CD4-positive, alpha-beta T cell (primary cell): ENCODE measurements at regions of chr2 and their contacts with region 1.

Region 1: GRCh38 chr2:130342533-130343275 is at the start of gene IMP4:
- DNase-seq: peak; percentile 89 to 99 (median 93)
- ATAC-seq: peak; percentile 87
- H3K4me3 ChIP-seq: peak within 1 kb of the TSS; percentile 68
- H3K4me3 Mint-ChIP-seq: peak within 1 kb of the TSS; percentile 93
- H3K27ac ChIP-seq: peak within 1 kb of the TSS; percentile 96 to 97
- H3K27ac Mint-ChIP-seq: peak within 1 kb of the TSS; percentile 99
- H3K4me1 ChIP-seq: peaks cover 34% of the 10 kb centered on the region
- H3K4me1 Mint-ChIP-seq: peaks cover 46% of the 10 kb centered on the region
- H3K27me3 ChIP-seq: no peaks in the 10 kb centered on the region
- H3K27me3 Mint-ChIP-seq: no peaks in the 10 kb centered on the region
- CTCF ChIP-seq: peak; percentile 46
- total RNA-seq, gene IMP4: 81.7 to 88.1 TPM

Region 2: GRCh38 chr2:129877289-129877779 is 465.4 kb before region 1 on chr2:
- CTCF ChIA-PET with region 1: interaction called, 3 read pairs
- POLR2A ChIA-PET with region 1: interaction called, 15 read pairs
- intact Hi-C with region 1: loop called in 1 of 2 experiments (anchors 5 kb)
- DNase-seq: peak; percentile 72 to 93 (median 82)
- ATAC-seq: peak; percentile 90
- H3K4me3 ChIP-seq: peak overlapping the region; percentile 81
- H3K4me3 Mint-ChIP-seq: peak overlapping the region; percentile 99
- H3K27ac ChIP-seq: peak overlapping the region in 1 of 2 donors; percentile 50
- H3K27ac Mint-ChIP-seq: peak overlapping the region; percentile 92
- H3K4me1 ChIP-seq: peaks cover 15% of the 10 kb centered on the region
- H3K4me1 Mint-ChIP-seq: peaks cover 11% of the 10 kb centered on the region
- H3K27me3 ChIP-seq: no peaks in the 10 kb centered on the region
- H3K27me3 Mint-ChIP-seq: no peaks in the 10 kb centered on the region
- CTCF ChIP-seq: no peak

Region 3: DNA sequence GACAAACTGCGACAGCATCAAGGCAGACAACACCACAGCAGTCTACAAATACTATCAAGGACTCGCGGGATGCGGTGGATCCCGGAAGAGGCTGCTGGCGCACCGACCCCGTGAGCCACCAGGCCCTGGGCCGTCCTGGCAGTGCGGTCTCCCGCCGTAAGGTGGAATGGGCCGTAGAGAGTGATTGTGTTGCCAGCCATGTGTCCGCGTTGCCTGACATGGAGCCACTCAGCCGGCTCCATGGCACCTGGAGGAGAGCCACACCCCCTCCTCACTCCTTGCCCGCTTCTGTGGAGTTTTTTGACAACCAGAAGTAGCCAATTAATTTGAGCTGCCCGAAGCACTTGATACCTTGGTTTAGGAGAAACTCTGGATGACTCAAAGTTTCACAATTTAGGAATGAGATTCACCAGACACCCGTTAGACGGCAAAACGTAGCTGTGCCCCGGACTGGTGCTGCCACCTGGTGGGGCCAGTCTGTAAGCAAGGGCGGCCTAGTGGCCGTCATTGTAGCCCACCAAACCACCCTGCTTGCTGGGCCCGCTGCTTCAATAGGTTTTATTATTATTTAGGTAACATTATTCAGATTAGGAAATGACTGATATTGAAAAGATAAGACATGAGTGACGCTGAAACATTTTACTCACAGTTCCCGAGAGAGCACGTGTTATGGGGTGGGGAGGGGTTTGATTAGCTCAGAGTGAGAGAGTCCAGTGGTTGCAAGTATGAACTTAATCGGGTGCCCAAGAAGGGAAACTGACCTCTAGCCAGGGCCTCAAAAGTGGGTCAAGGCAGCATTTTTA is 10.2 kb before region 1 on chr2:
- CTCF ChIA-PET with region 1: interaction called, 35 read pairs
- POLR2A ChIA-PET with region 1: interaction called, 47 read pairs
- intact Hi-C with region 1: no loop called
- DNase-seq: peak; percentile 45 to 80 (median 62)
- ATAC-seq: peak; percentile 76
- H3K4me3 ChIP-seq: no peak overlapping the region
- H3K4me3 Mint-ChIP-seq: peak overlapping the region; percentile 40
- H3K27ac ChIP-seq: no peak overlapping the region
- H3K27ac Mint-ChIP-seq: no peak overlapping the region
- H3K4me1 ChIP-seq: peaks cover 9% of the 10 kb centered on the region
- H3K4me1 Mint-ChIP-seq: peaks cover 14% of the 10 kb centered on the region
- H3K27me3 ChIP-seq: peaks cover 2 to 7% of the 10 kb centered on the region in 2 experiments
- H3K27me3 Mint-ChIP-seq: peaks cover 36% of the 10 kb centered on the region
- CTCF ChIP-seq: peak; percentile 94

Region 4: GRCh38 chr2:130372055-130372832 is 29.5 kb after region 1 on chr2:
- CTCF ChIA-PET with region 1: interaction called, 12 read pairs
- POLR2A ChIA-PET with region 1: interaction called, 119 read pairs
- intact Hi-C with region 1: loop called (anchors 1 kb)
- DNase-seq: peak; percentile 57 to 85 (median 72)
- ATAC-seq: peak; percentile 83
- H3K4me3 ChIP-seq: peak overlapping the region; percentile 76
- H3K4me3 Mint-ChIP-seq: peak overlapping the region; percentile 92
- H3K27ac ChIP-seq: peak overlapping the region; percentile 70 to 80
- H3K27ac Mint-ChIP-seq: peak overlapping the region; percentile 97
- H3K4me1 ChIP-seq: peaks cover 71% of the 10 kb centered on the region
- H3K4me1 Mint-ChIP-seq: peaks cover 73% of the 10 kb centered on the region
- H3K27me3 ChIP-seq: no peaks in the 10 kb centered on the region
- H3K27me3 Mint-ChIP-seq: no peaks in the 10 kb centered on the region
- CTCF ChIP-seq: peak; percentile 67

Region 5: GRCh38 chr2:130727286-130728018 is 384.7 kb after region 1 on chr2:
- CTCF ChIA-PET with region 1: no interaction called
- POLR2A ChIA-PET with region 1: interaction called, 22 read pairs
- intact Hi-C with region 1: loop called in 1 of 2 experiments (anchors 5 kb)
- DNase-seq: peak; percentile 77 to 94 (median 87)
- ATAC-seq: peak; percentile 91
- H3K4me3 ChIP-seq: peak overlapping the region; percentile 84
- H3K4me3 Mint-ChIP-seq: peak overlapping the region; percentile 88
- H3K27ac ChIP-seq: peak overlapping the region; percentile 62 to 89
- H3K27ac Mint-ChIP-seq: peak overlapping the region; percentile 90
- H3K4me1 ChIP-seq: peaks cover 34% of the 10 kb centered on the region
- H3K4me1 Mint-ChIP-seq: no peaks in the 10 kb centered on the region
- H3K27me3 ChIP-seq: no peaks in the 10 kb centered on the region
- H3K27me3 Mint-ChIP-seq: peaks cover 5% of the 10 kb centered on the region
- CTCF ChIP-seq: no peak

Region 6: GRCh38 chr2:131093006-131093695 is 750.4 kb after region 1 on chr2 and contains the start of gene FAM168B:
- CTCF ChIA-PET with region 1: no interaction called
- POLR2A ChIA-PET with region 1: interaction called, 32 read pairs
- intact Hi-C with region 1: no loop called
- DNase-seq: peak; percentile 77 to 97 (median 88)
- ATAC-seq: peak; percentile 84
- H3K4me3 ChIP-seq: peak within 1 kb of the TSS; percentile 82
- H3K4me3 Mint-ChIP-seq: peak within 1 kb of the TSS; percentile 92
- H3K27ac ChIP-seq: peak within 1 kb of the TSS; percentile 79 to 90
- H3K27ac Mint-ChIP-seq: peak within 1 kb of the TSS; percentile 93
- H3K4me1 ChIP-seq: peaks cover 26% of the 10 kb centered on the region
- H3K4me1 Mint-ChIP-seq: peaks cover 32% of the 10 kb centered on the region
- H3K27me3 ChIP-seq: no peaks in the 10 kb centered on the region
- H3K27me3 Mint-ChIP-seq: no peaks in the 10 kb centered on the region
- CTCF ChIP-seq: no peak
- total RNA-seq, gene FAM168B: 74.1 to 76.4 TPM

Region 7: GRCh38 chr2:131492418-131493198 is 1149.9 kb after region 1 on chr2:
- CTCF ChIA-PET with region 1: no interaction called
- POLR2A ChIA-PET with region 1: interaction called, 19 read pairs
- intact Hi-C with region 1: loop called in 1 of 2 experiments (anchors 5 kb)
- DNase-seq: peak; percentile 83 to 98 (median 93)
- ATAC-seq: peak; percentile 71
- H3K4me3 ChIP-seq: peak overlapping the region; percentile 83
- H3K4me3 Mint-ChIP-seq: peak overlapping the region; percentile 98
- H3K27ac ChIP-seq: peak overlapping the region; percentile 94 to 96
- H3K27ac Mint-ChIP-seq: peak overlapping the region; percentile 98
- H3K4me1 ChIP-seq: peaks cover 45% of the 10 kb centered on the region
- H3K4me1 Mint-ChIP-seq: peaks cover 30% of the 10 kb centered on the region
- H3K27me3 ChIP-seq: no peaks in the 10 kb centered on the region
- H3K27me3 Mint-ChIP-seq: no peaks in the 10 kb centered on the region
- CTCF ChIP-seq: peak; percentile 87

Region 8: DNA sequence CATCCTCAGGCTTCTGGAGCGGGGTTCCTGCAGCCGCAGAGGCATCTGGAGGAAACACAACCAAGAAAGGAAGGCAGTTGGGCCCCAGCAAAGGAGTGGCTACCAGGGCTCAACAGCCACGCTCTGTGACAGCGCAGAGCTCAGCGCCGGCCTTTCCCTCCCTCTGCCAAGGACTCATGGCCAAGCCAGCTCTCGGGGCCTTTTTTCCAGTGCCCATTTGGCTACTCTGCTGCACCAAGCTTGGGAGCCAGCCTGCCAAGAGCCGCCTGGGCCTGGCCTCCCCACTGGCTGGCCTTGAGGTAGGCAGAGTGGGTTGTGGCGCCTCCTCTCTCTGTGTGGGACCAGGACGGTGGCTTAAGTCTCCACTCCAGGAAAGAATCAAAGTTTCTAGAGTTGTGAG is 1177.8 kb after region 1 on chr2:
- CTCF ChIA-PET with region 1: no interaction called
- POLR2A ChIA-PET with region 1: no interaction called
- intact Hi-C with region 1: no loop called
- DNase-seq: no peak
- ATAC-seq: no peak
- H3K4me3 ChIP-seq: no peak overlapping the region
- H3K4me3 Mint-ChIP-seq: no peak overlapping the region
- H3K27ac ChIP-seq: no peak overlapping the region
- H3K27ac Mint-ChIP-seq: no peak overlapping the region
- H3K4me1 ChIP-seq: no peaks in the 10 kb centered on the region
- H3K4me1 Mint-ChIP-seq: no peaks in the 10 kb centered on the region
- H3K27me3 ChIP-seq: no peaks in the 10 kb centered on the region
- H3K27me3 Mint-ChIP-seq: no peaks in the 10 kb centered on the region
- CTCF ChIP-seq: no peak